Right ventricle myocardium inferior (tissue), 1 donor: ENCODE measurements at regions of chr1 and their contacts with region 1.

Region 1: DNA sequence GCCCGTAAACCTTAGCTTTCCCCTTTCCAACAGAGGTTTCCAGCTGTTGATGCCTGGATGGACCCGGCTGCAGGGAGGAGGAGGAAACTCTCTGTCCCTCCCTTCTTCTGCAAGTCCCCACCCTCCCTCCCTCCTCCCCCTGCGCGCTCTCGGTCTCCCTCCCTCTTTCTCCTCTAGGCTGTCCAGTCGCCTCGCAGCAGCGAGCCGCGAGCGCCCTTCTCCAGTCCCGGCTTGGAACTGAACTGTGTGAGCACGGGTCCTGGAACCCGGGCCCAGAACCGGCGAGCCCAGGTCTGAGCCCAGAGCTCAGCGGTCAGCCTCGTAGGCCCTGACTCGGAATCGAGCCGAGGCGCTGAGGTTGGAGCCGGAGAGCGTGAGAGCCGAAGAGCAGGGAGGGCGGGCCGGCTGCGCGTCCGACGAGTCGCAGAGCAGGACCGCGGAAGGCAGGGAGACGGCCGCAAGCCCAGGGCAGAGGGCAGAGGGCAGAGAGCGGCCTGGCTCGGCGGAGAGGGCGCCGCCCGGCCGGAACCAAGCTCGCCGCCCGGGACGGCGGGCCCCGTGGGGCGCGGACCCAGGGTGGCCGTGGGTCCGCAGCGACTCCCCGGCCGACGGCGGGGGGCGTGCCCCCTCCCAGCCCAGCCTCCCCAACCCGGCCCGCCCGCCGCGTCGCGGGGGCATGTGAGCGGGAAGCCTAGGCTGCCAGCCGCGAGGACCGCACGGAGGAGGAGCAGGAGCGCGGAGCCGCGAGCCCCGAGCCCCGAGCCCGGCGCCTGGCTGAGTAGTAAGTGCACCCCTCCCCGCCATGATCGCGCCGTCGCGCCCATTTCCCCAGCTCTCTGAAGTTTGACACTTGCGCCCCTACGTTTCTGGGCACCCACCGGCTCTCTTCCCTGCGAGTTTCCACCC is at the start of gene SOX13:
- DNase-seq: peak; percentile 92
- ATAC-seq: peak; percentile 84
- total RNA-seq, gene SOX13: 12.1 TPM

Region 2: DNA sequence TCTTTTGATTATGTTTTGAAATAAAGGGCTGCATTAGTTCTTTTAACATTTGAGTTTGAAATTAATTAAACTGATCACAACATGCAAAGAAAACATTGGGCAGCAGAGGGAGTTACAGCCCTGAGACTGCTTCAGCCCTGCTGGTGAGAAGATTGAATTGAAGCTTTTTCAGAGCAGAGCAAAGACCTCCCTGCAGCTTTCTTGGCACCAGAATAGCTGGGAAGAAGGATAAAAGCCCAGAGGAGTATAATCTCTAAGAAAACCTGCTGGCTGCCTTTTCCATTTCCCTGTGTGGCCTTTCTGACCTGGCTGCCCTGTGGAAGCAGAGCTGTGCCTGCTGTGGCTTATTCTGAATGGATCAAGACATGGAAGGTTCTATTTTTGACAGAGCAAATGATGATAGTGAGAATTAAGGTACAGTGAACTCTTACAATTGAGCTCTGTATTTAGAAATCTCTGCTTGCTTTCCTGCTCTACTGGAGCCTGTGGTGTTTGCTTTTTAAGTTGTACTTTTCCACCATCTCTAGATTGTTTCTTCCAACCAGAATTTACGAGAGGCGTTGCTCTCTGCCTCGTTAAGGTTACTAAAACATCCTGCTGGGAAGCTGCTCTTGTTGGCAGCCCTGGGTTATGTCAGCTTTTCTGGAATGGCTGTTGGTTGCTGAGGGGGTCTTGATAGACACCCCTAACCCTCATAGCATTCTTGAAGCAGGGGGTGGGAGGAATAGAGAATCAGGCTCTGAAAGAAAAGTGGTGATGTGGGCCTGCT is 201.9 kb before region 1 on chr1:
- intact Hi-C with region 1: loop called (anchors 2 kb)
- DNase-seq: no peak
- ATAC-seq: peak; percentile 80

Region 3: DNA sequence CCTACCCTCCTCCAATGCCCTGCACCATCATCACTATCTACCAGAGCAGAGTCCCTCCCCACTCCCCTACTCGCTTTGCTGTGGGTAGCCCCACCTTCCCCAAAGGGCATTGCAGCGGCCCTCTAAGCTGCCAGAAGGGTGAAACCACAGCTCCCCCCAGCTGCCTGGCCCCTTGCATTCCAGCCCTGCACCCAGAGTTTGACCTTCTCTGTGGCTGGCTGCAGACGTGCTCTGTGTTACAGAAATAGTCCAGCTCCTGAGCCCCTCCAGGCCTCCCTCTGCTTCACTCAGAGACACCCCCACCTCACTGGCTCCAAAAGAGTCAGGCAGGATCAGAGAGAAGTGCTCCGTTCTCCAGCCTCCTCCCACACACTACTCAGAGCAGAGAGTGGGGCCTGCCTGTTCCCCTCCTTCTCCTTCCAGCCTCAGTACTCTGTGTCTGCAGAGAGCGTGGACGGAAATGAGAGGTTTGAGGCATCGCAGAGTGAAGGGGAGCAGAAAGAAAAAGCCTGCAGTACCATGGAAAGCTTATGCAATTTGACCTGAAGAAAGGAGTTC is 223.3 kb after region 1 on chr1:
- intact Hi-C with region 1: no loop called
- DNase-seq: no peak
- ATAC-seq: no peak